CD14-positive monocyte (primary cell): ENCODE measurements at regions of chr21 and their contacts with region 1.

Region 1: DNA sequence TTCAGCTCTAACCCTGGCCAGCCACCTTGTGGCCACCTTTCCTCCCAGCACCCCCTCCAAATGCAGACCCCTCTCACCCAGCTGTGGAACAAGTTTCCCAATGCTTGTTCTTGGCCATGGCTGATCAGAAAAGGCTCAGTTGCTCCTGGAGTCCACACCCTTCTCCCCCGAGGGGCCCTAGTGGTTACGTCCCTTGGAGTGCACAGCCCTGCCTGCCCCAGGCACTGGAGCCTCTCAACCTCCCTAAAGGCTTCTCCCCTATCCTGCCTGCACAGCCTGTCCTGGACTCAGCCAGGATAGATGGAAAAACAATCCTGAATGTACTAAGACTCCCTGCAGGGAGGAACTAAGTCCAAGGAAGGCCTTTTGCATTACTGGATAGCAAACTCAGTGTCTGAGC is 18.8 kb downstream of the MX2 start:
- DNase-seq: no peak
- H3K4me3 ChIP-seq: no peak overlapping the region
- H3K4me3 Mint-ChIP-seq: no peak overlapping the region
- H3K27ac ChIP-seq: no peak overlapping the region
- H3K27ac Mint-ChIP-seq: peak overlapping the region in 4 of 7 donors; percentile 1 to 82 (median 41)
- H3K4me1 ChIP-seq: no peaks in the 10 kb centered on the region
- H3K4me1 Mint-ChIP-seq: no peaks in the 10 kb centered on the region
- H3K27me3 ChIP-seq: no peaks in the 10 kb centered on the region
- H3K27me3 Mint-ChIP-seq: no peaks in the 10 kb centered on the region
- CTCF ChIP-seq: no peak

Region 2: GRCh38 chr21:41345934-41346685 is 34.5 kb before region 1 on chr21:
- intact Hi-C with region 1: loop called in 1 of 2 experiments (anchors 5 kb)
- DNase-seq: no peak
- H3K4me3 ChIP-seq: no peak overlapping the region
- H3K4me3 Mint-ChIP-seq: no peak overlapping the region
- H3K27ac ChIP-seq: no peak overlapping the region
- H3K27ac Mint-ChIP-seq: peak overlapping the region in 1 of 7 donors; percentile 50
- H3K4me1 ChIP-seq: peaks cover 13 to 14% of the 10 kb centered on the region in 2 donors
- H3K4me1 Mint-ChIP-seq: peaks cover 10% of the 10 kb centered on the region
- H3K27me3 ChIP-seq: no peaks in the 10 kb centered on the region
- H3K27me3 Mint-ChIP-seq: peaks cover 5 to 9% (median 6%) of the 10 kb centered on the region in 3 donors
- CTCF ChIP-seq: no peak

Region 3: GRCh38 chr21:42289926-42290325 is 909.3 kb after region 1 on chr21:
- intact Hi-C with region 1: no loop called
- DNase-seq: peak; percentile 74 to 84 (median 84)
- H3K4me3 ChIP-seq: no peak overlapping the region
- H3K4me3 Mint-ChIP-seq: peak overlapping the region in 1 of 2 donors; percentile 35
- H3K27ac ChIP-seq: peak overlapping the region in 1 of 2 donors; percentile 10
- H3K27ac Mint-ChIP-seq: peak overlapping the region; percentile 15 to 83 (median 51)
- H3K4me1 ChIP-seq: peaks cover 19 to 28% of the 10 kb centered on the region in 2 donors
- H3K4me1 Mint-ChIP-seq: peaks cover 42% of the 10 kb centered on the region
- H3K27me3 ChIP-seq: no peaks in the 10 kb centered on the region
- H3K27me3 Mint-ChIP-seq: peaks cover 0 to 6% (median 0%) of the 10 kb centered on the region in 3 donors
- CTCF ChIP-seq: no peak